HCT116 (cell line): ENCODE measurements at regions of chr7 and their contacts with region 1.

Region 1: GRCh38 chr7:64469673-64470072 is 93.2 kb downstream of the ZNF680 start:
- DNase-seq: no peak
- ATAC-seq: no peak
- H3K4me3 ChIP-seq: no peak overlapping the region
- H3K27ac ChIP-seq: no peak overlapping the region
- H3K4me1 ChIP-seq: no peaks in the 10 kb centered on the region
- H3K27me3 ChIP-seq: no peaks in the 10 kb centered on the region
- CTCF ChIP-seq: no peak
- POLR2A ChIP-seq: no peak
- RAD21 ChIP-seq: no peak

Region 2: DNA sequence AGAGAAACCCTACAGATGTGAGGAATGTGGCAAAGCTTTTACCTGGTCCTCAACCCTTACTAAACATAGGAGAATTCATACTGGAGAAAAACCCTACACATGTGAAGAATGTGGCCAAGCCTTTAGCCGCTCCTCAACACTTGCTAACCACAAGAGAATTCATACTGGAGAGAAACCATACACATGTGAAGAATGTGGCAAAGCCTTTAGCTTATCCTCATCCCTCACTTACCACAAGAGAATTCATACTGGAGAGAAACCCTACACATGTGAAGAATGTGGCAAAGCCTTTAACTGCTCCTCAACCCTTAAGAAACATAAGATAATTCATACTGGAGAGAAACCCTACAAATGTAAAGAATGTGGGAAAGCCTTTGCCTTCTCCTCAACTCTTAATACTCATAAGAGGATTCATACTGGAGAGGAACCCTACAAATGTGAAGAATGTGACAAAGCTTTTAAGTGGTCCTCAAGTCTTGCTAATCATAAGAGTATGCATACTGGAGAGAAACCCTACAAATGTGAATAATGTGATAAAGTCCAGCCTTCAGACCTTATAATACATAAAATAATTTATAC is 203.2 kb before region 1 on chr7:
- CTCF ChIA-PET with region 1: no interaction called
- POLR2A ChIA-PET with region 1: no interaction called
- RAD21 ChIA-PET with region 1: no interaction called
- intact Hi-C with region 1: no loop called
- DNase-seq: no peak
- ATAC-seq: no peak
- H3K4me3 ChIP-seq: no peak overlapping the region
- H3K27ac ChIP-seq: no peak overlapping the region
- H3K4me1 ChIP-seq: no peaks in the 10 kb centered on the region
- H3K27me3 ChIP-seq: no peaks in the 10 kb centered on the region
- CTCF ChIP-seq: no peak
- POLR2A ChIP-seq: no peak
- RAD21 ChIP-seq: no peak

Region 3: GRCh38 chr7:64407148-64407547 is 62.5 kb before region 1 on chr7:
- CTCF ChIA-PET with region 1: no interaction called
- POLR2A ChIA-PET with region 1: no interaction called
- RAD21 ChIA-PET with region 1: no interaction called
- intact Hi-C with region 1: no loop called
- DNase-seq: no peak
- ATAC-seq: no peak
- H3K4me3 ChIP-seq: no peak overlapping the region
- H3K27ac ChIP-seq: no peak overlapping the region
- H3K4me1 ChIP-seq: no peaks in the 10 kb centered on the region
- H3K27me3 ChIP-seq: no peaks in the 10 kb centered on the region
- CTCF ChIP-seq: no peak
- POLR2A ChIP-seq: no peak
- RAD21 ChIP-seq: no peak

Region 4: GRCh38 chr7:64504581-64505120 is 35.0 kb after region 1 on chr7:
- CTCF ChIA-PET with region 1: no interaction called
- POLR2A ChIA-PET with region 1: no interaction called
- RAD21 ChIA-PET with region 1: no interaction called
- intact Hi-C with region 1: loop called (anchors 5 kb)
- DNase-seq: no peak
- ATAC-seq: no peak
- H3K4me3 ChIP-seq: no peak overlapping the region
- H3K27ac ChIP-seq: no peak overlapping the region
- H3K4me1 ChIP-seq: no peaks in the 10 kb centered on the region
- H3K27me3 ChIP-seq: no peaks in the 10 kb centered on the region
- CTCF ChIP-seq: no peak
- POLR2A ChIP-seq: no peak
- RAD21 ChIP-seq: no peak

Region 5: GRCh38 chr7:64541438-64542359 is 72.0 kb after region 1 on chr7:
- CTCF ChIA-PET with region 1: no interaction called
- POLR2A ChIA-PET with region 1: no interaction called
- RAD21 ChIA-PET with region 1: no interaction called
- intact Hi-C with region 1: no loop called
- DNase-seq: peak; percentile 55
- ATAC-seq: peak; percentile 98
- H3K4me3 ChIP-seq: peak overlapping the region in 1 of 2 experiments; percentile 8; a peak in 2 of 4 replicates
- H3K27ac ChIP-seq: peak overlapping the region; percentile 68
- H3K4me1 ChIP-seq: peaks cover 15 to 29% of the 10 kb centered on the region in 2 experiments
- H3K27me3 ChIP-seq: no peaks in the 10 kb centered on the region
- CTCF ChIP-seq: no peak
- POLR2A ChIP-seq: no peak
- RAD21 ChIP-seq: no peak

Region 6: DNA sequence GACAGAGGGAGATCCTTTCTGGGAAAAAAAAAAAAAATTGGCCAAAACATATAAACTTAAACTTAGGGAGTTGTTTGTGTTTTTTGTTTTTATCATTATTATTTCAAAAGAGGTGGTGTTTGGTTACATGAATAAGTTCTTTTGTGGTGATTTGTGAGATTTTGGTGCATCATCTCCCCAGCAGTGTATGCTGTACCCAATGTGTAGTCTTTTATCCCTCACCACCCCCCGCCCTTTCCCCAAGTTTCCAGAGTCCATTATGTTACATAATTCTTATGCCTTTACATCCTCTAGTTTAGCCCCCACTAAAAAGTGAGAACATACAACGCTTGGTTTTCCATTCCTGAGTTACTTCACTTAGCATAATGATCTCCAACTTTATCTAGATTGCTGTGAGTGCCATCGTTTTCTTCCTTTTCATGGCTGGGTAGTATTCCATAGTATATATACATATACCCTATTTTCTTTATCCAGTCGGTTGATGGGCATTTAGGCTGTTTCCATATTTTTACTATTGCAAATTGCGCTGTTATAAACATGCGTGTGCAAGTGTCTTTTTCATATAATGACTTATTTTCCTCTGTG is 755.8 kb after region 1 on chr7:
- CTCF ChIA-PET with region 1: no interaction called
- POLR2A ChIA-PET with region 1: no interaction called
- RAD21 ChIA-PET with region 1: no interaction called
- intact Hi-C with region 1: no loop called
- DNase-seq: no peak
- ATAC-seq: no peak
- H3K4me3 ChIP-seq: no peak overlapping the region
- H3K27ac ChIP-seq: no peak overlapping the region
- H3K4me1 ChIP-seq: no peaks in the 10 kb centered on the region
- H3K27me3 ChIP-seq: no peaks in the 10 kb centered on the region
- CTCF ChIP-seq: no peak
- POLR2A ChIP-seq: no peak
- RAD21 ChIP-seq: no peak